T-cell (primary cell): ENCODE measurements at regions of chr6 and their contacts with region 1.

Region 1: GRCh38 chr6:138654715-138655634 is 118.6 kb upstream of the CCDC28A start:
- DNase-seq: no peak
- ATAC-seq: no peak
- H3K4me3 ChIP-seq: no peak overlapping the region
- H3K4me3 Mint-ChIP-seq: no peak overlapping the region
- H3K27ac ChIP-seq: no peak overlapping the region
- H3K27ac Mint-ChIP-seq: no peak overlapping the region
- H3K4me1 ChIP-seq: no peaks in the 10 kb centered on the region
- H3K4me1 Mint-ChIP-seq: peaks cover 10 to 14% (median 13%) of the 10 kb centered on the region in 3 donors
- H3K27me3 ChIP-seq: no peaks in the 10 kb centered on the region
- H3K27me3 Mint-ChIP-seq: peaks cover 0 to 8% of the 10 kb centered on the region in 2 donors

Region 2: GRCh38 chr6:139433631-139434419 is 778.9 kb after region 1 on chr6:
- CTCF ChIA-PET with region 1: no interaction called
- POLR2A ChIA-PET with region 1: interaction called in 1 of 2 experiments, 13 read pairs
- DNase-seq: no peak
- ATAC-seq: no peak
- H3K4me3 ChIP-seq: no peak overlapping the region
- H3K4me3 Mint-ChIP-seq: no peak overlapping the region
- H3K27ac ChIP-seq: no peak overlapping the region
- H3K27ac Mint-ChIP-seq: no peak overlapping the region
- H3K4me1 ChIP-seq: no peaks in the 10 kb centered on the region
- H3K4me1 Mint-ChIP-seq: peaks cover 0 to 1% (median 0%) of the 10 kb centered on the region in 3 donors
- H3K27me3 ChIP-seq: no peaks in the 10 kb centered on the region
- H3K27me3 Mint-ChIP-seq: peaks cover 0 to 3% of the 10 kb centered on the region in 2 donors